ENCODE measurements at regions of chr5 and their contacts with region 1.

Region 1: DNA sequence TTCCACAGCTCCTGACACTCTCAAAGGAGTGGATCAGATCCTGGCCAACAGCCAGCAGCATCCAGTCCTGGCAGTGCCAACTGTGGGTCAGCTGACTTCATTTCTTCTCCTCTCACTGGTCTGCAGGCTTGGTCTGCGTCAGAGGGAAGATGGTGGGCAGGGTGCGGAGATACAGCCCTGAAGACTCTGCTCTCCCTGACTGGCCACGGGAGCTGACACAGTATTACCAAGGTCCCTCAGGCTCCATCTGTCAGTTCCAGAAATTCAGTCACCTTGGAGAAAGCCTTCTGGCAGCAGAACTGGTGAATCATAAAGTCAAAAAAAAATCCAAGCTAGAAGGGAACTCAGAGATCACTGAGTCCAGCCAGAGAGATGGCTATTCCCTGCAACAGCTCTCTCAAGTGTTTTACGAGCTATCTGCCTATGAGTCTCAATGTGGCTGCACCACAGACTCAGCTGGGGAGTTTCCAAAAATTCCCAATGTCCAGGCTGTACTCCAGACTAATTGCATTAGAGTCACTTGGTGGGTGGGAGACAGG is 28.0 kb downstream of the C1QTNF2 start:
- DNase-seq: peak; percentile 72
- H3K4me3 Mint-ChIP-seq: no peak overlapping the region
- H3K27ac Mint-ChIP-seq: no peak overlapping the region
- H3K4me1 Mint-ChIP-seq: no peaks in the 10 kb centered on the region
- H3K27me3 Mint-ChIP-seq: no peaks in the 10 kb centered on the region
- CTCF ChIP-seq: no peak

Region 2: DNA sequence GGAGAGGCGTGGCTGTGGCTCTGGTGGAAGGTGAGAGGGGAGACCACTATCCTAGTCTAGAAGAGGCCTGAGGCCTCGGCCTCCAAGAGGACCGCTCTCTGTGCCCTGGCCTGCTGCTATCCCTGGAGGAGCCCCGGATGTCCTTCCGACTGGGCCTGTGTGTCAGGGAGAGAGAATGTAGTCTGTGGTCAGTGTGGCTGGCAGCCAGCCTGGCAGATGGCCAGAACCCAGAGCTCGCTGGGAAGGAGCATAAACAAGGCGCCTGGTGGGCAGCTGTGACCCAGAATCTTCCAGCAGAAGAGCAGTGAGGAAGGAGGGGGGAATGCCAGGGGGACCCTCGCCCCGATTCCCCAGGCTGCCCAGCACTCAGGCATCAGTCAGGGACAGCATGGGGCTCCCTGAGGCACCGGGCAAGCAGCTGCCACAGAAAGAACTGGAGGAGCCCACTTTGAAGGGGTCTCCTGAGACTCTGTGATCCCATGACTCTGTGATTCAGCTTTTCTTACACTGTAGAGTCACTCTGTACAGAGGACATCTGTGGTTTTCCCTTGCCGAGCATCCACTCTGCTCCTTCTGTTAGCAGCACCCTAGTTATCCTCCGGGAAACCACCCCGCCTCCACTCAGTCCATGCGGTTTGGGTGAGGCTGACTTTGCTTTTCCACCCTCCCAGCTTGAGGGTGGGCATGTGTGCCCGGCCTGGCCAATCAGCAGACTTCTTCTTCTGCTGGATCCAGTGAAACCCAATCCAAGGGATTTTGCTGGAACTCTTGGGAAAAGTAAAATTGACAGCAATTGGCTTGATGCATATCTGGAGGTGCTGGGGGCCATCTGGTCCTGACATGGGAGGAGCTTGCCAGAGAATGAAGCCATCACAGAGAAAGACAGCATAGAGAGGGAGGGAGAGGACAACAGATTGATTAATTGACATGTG is 177.1 kb before region 1 on chr5:
- CTCF ChIA-PET with region 1: interaction called, 10 read pairs
- POLR2A ChIA-PET with region 1: no interaction called
- intact Hi-C with region 1: no loop called
- DNase-seq: peak; percentile 100
- H3K4me3 Mint-ChIP-seq: peak overlapping the region; percentile 54
- H3K27ac Mint-ChIP-seq: peak overlapping the region; percentile 87
- H3K4me1 Mint-ChIP-seq: peaks cover 33% of the 10 kb centered on the region
- H3K27me3 Mint-ChIP-seq: no peaks in the 10 kb centered on the region
- CTCF ChIP-seq: no peak

Region 3: GRCh38 chr5:160213537-160213936 is 128.9 kb before region 1 on chr5:
- CTCF ChIA-PET with region 1: interaction called, 29 read pairs
- POLR2A ChIA-PET with region 1: no interaction called
- intact Hi-C with region 1: no loop called
- DNase-seq: peak; percentile 22
- H3K4me3 Mint-ChIP-seq: no peak overlapping the region
- H3K27ac Mint-ChIP-seq: no peak overlapping the region
- H3K4me1 Mint-ChIP-seq: no peaks in the 10 kb centered on the region
- H3K27me3 Mint-ChIP-seq: no peaks in the 10 kb centered on the region
- CTCF ChIP-seq: no peak

Region 4: DNA sequence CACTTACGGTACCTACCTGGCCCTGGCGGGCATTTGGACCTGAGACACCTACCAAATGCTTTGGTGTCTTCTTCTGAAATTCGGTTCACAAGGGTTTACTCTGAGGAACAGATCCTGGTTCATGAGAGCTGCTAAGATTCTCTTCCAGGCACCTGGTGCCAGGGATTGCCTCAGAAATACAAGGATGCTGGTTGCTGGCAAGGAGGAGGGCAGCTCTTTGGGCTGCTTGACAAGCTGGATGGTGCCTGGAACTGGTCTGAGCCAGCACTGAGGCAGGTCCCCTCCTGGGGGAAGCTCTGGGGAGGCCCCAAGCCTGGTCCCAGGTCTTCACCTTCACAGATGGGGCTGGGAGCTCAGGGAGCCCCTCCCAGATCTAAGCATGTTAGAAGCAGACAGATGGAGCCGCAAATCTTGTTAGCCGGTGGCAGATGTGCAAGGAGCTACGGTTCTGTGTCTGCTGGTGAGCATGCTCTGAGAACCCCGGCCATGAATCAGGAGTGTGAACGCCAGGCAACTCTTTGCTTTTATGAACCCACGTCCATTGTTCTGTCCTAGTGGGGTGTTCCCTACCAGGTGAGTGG is 96.9 kb before region 1 on chr5:
- CTCF ChIA-PET with region 1: interaction called, 197 read pairs
- POLR2A ChIA-PET with region 1: interaction called, 6 read pairs
- intact Hi-C with region 1: loop called (anchors 1 kb)
- DNase-seq: no peak
- H3K4me3 Mint-ChIP-seq: no peak overlapping the region
- H3K27ac Mint-ChIP-seq: no peak overlapping the region
- H3K4me1 Mint-ChIP-seq: no peaks in the 10 kb centered on the region
- H3K27me3 Mint-ChIP-seq: peaks cover 12% of the 10 kb centered on the region
- CTCF ChIP-seq: no peak

Region 5: GRCh38 chr5:160357861-160358411 is 15.5 kb after region 1 on chr5:
- CTCF ChIA-PET with region 1: interaction called, 25 read pairs
- POLR2A ChIA-PET with region 1: no interaction called
- intact Hi-C with region 1: no loop called
- DNase-seq: no peak
- H3K4me3 Mint-ChIP-seq: no peak overlapping the region
- H3K27ac Mint-ChIP-seq: no peak overlapping the region
- H3K4me1 Mint-ChIP-seq: peaks cover 7% of the 10 kb centered on the region
- H3K27me3 Mint-ChIP-seq: no peaks in the 10 kb centered on the region
- CTCF ChIP-seq: no peak

Region 6: DNA sequence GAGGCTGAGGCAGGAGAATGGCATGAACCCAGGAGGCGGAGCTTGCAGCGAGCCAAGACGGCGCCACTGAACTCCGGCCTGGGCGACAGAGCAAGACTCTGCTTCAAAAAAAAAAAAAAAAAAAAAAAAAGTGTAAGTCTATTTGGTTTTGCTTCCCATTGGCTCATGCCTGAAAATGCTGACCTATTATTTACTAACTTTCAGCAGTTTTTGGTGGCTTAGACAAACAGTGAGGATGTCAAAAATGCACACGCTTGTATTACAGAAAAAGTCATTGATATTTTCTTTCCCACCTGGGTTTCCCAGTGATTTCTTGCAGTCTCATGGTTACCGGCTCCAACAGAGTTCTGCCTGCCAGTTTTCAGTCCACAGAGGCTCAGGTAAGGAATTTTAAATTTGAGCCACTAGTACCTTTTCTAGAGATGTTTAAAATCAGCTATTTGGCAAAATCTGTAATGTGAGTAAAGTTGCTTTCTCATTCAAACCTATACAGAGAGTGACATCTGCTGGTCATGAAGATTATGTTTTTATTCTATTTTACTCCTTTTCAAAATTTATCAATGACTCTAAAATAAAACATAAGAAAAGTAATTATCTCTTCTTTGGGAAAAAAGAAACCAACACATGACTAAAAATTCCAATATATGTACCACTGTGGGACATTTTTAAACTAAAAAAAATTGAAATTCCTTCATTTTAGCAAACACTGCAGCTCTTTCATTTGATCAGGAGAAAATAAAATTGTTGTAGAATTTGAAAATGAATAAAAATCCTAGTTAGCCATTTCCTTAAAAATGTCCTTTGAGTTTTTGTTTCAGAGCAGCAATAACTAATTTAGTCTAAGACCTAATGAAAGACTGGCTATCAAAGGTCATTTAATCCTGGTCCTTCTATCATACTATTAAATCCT is 48.6 kb after region 1 on chr5:
- CTCF ChIA-PET with region 1: interaction called, 48 read pairs
- POLR2A ChIA-PET with region 1: interaction called, 3 read pairs
- intact Hi-C with region 1: loop called (anchors 1 kb)
- DNase-seq: peak; percentile 47
- H3K4me3 Mint-ChIP-seq: no peak overlapping the region
- H3K27ac Mint-ChIP-seq: no peak overlapping the region
- H3K4me1 Mint-ChIP-seq: no peaks in the 10 kb centered on the region
- H3K27me3 Mint-ChIP-seq: no peaks in the 10 kb centered on the region
- CTCF ChIP-seq: peak; percentile 64